ENCODE measurements at regions of chr9 and their contacts with region 1.

Region 1: DNA sequence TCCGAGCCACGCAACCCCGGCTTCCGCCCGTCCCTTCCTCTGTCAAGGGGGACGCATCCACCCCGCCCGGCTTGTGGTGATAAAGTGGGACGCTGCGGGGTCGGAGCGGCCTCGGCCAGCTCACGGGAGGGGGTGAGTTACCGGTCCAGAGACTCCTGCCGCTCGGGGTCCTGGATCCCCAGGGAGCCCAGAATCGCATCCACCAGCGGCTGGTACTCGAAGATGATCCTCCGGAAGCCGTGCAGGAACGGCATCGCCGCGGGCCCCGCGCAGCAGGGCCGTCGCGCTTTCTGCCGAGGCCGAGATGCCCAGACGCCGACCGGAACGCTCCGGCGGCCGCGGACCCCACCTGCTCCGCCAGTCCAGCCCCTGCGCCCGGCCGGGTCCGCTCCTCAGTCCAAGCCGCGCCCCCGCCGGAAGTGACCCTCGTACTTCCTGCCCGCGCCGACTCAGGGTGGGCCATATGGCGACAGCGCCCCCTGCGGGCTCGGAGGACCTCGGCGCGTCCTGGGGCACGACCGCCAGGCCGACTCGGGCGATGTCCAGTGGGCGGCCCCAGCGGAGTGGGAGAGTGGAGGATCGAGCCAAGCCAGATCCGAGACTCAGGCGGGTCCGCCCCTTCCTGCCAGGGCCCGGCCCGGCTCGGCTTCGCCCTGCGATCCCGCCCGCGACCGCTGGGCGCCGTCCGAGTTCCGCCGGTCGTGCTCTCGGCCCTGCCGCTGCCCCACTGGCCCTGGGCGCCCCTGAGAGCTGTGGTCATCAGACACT is at the start of gene ASB6:
- DNase-seq: peak; percentile 94
- H3K4me3 Mint-ChIP-seq: peak within 1 kb of the TSS; percentile 81
- H3K27ac Mint-ChIP-seq: peak within 1 kb of the TSS; percentile 73
- H3K4me1 Mint-ChIP-seq: peaks cover 25% of the 10 kb centered on the region
- H3K27me3 Mint-ChIP-seq: no peaks in the 10 kb centered on the region
- total RNA-seq, gene ASB6: 22.5 to 23.4 TPM

Region 2: DNA sequence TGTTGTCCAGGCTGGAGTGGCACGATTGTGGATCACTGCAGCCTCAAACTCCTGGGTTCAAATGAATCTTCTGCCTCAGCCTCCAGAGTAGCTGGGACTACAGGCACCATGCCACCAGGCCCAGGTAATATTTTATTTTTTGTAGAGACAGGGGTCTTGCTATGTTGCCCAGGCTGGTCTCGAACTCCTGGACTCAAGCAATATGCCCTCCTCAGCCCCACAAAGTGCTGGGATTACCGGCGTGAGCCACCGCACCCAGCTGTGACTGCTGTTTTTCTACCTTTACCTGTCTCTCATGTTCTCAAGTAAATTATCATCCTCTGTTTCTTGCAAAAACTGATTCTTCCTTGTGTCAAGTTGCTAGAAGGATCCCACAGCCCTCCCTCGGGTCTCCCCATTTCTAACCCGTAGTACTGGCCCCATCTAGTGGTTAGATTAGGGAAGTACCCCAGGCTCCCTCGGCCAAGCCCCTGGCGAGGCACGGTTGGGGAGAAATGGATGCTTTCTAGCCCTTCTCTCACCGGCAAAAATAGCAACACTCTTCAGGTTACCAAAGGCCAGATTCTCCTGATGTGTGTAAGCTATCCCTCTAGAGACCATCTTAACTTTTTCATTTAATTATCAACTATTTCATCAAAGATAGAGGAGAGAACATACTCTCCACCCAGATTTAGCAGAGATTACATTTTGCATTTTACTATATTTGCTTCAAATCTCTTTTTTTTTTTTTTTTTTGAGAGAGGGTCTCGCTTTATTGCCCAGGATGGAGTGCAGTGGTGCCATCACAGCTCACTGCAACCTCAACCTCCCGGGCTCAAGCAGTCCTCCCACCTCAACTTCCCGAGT is 141.8 kb after region 1 on chr9:
- CTCF ChIA-PET with region 1: interaction called, 13 read pairs
- POLR2A ChIA-PET with region 1: no interaction called
- DNase-seq: peak; percentile 74
- H3K4me3 Mint-ChIP-seq: no peak overlapping the region
- H3K27ac Mint-ChIP-seq: no peak overlapping the region
- H3K4me1 Mint-ChIP-seq: peaks cover 3% of the 10 kb centered on the region
- H3K27me3 Mint-ChIP-seq: peaks cover 30% of the 10 kb centered on the region